ENCODE measurements at regions of chr13 and their contacts with region 1.

Region 1: GRCh38 chr13:112669881-112670499 is 19.8 kb upstream of the ATP11A start:
- DNase-seq: no peak
- H3K4me3 ChIP-seq: no peak overlapping the region
- H3K27ac ChIP-seq: no peak overlapping the region
- H3K4me1 ChIP-seq: no peaks in the 10 kb centered on the region
- H3K27me3 ChIP-seq: peaks cover 3% of the 10 kb centered on the region
- CTCF ChIP-seq: no peak

Region 2: DNA sequence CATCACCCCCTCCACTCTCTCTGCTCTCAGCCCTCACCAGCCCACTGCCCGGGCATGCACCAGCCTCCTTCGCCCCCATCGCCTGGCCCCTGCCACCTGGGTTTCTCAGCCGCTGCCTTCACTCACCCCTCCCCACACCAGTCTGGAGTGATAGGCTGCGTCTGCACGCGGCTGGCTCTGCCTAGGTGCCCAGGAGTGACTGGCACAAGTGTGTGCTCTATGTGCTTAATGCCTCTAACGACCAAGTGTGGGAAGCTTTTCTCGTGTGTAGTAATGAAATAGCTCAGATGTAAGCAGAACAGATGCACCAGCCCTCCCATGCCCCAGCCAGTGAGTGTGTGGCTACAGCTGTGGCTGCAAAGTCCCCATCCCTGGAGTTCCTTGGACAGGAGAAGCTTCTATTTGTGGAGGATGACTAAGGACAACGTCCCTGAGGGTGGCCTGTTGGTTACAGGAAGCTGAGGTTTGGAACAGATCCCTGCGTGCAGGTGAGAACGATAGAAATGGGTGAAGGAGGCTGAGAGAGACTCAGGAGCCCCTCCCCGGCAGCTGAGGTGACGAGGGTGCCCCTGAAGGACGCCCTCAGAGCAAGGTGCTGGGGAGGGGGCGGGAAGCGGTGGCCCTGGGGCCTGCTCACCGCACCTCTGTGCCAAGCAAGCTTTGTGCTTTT is 55.5 kb after region 1 on chr13:
- CTCF ChIA-PET with region 1: no interaction called
- dilution Hi-C with region 1: loop called (anchors 5 kb)
- in situ Hi-C with region 1: no loop called
- intact Hi-C with region 1: no loop called
- DNase-seq: peak; percentile 58
- H3K4me3 ChIP-seq: no peak overlapping the region
- H3K27ac ChIP-seq: no peak overlapping the region
- H3K4me1 ChIP-seq: peaks cover 17% of the 10 kb centered on the region
- H3K27me3 ChIP-seq: no peaks in the 10 kb centered on the region
- CTCF ChIP-seq: no peak

Region 3: GRCh38 chr13:112767506-112768471 is 97.8 kb after region 1 on chr13:
- CTCF ChIA-PET with region 1: no interaction called
- dilution Hi-C with region 1: loop called (anchors 5 kb)
- in situ Hi-C with region 1: no loop called
- intact Hi-C with region 1: no loop called
- DNase-seq: no peak
- H3K4me3 ChIP-seq: no peak overlapping the region
- H3K27ac ChIP-seq: no peak overlapping the region
- H3K4me1 ChIP-seq: no peaks in the 10 kb centered on the region
- H3K27me3 ChIP-seq: no peaks in the 10 kb centered on the region
- CTCF ChIP-seq: no peak

Region 4: DNA sequence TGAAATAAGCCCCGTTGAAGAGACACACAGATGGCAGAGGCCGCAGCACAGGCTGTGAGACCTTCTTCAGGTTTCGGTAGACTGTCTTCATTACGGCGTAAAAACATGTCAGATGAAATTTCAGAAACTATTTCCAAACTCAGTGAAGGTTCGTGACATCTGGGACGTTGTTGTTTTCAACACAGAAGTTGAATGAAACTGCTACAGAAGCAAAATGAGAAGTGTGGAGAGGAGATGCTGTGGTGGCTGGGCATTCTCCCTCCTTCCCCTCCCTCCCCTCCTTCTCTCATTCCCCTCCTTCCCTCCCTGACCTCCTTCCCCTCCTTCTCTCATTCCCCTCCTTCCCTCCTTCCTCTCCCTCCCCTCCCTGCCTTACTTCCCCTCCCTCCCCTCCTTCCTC is 133.4 kb after region 1 on chr13:
- CTCF ChIA-PET with region 1: no interaction called
- dilution Hi-C with region 1: no loop called
- in situ Hi-C with region 1: no loop called
- intact Hi-C with region 1: no loop called
- DNase-seq: no peak
- H3K4me3 ChIP-seq: no peak overlapping the region
- H3K27ac ChIP-seq: no peak overlapping the region
- H3K4me1 ChIP-seq: no peaks in the 10 kb centered on the region
- H3K27me3 ChIP-seq: no peaks in the 10 kb centered on the region
- CTCF ChIP-seq: no peak

Region 5: DNA sequence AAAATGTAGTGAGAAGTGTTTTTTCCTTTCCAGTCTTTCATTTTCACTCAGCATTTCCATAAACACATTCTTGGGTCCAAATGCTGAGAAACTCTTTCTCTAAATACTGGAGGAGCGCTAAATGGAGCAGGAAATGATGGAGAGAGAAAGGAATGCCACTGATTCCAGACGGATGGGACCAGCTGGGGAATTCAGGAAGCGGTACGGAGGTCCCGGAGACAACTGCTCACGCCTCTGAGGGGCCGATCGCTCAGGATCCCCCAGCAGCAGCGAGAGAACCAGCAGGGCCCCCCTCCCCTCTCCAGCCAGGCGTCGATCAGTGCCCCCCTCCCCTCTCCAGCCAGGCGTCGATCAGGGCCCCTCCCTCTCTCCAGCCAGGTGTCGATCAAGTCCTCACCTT is 1449.2 kb after region 1 on chr13:
- CTCF ChIA-PET with region 1: no interaction called
- dilution Hi-C with region 1: no loop called
- in situ Hi-C with region 1: no loop called
- intact Hi-C with region 1: no loop called
- DNase-seq: peak; percentile 30
- H3K4me3 ChIP-seq: peak overlapping the region in 1 of 3 experiments; percentile 14
- H3K27ac ChIP-seq: no peak overlapping the region
- H3K4me1 ChIP-seq: peaks cover 11% of the 10 kb centered on the region
- H3K27me3 ChIP-seq: no peaks in the 10 kb centered on the region
- CTCF ChIP-seq: no peak

Measured in mammary epithelial cell (primary cell).